Adrenal gland (tissue), 19 donors: ENCODE measurements at regions of chr6 and their contacts with region 1.

Region 1: GRCh38 chr6:111427341-111428116 is 55.5 kb downstream of the REV3L start:
- DNase-seq: peak in 5 of 7 donors; percentile 32 to 60 (median 46)
- H3K4me3 ChIP-seq: peak overlapping the region in 1 of 4 donors; percentile 15
- H3K27ac ChIP-seq: peak overlapping the region; percentile 11 to 58 (median 35)
- H3K4me1 ChIP-seq: peaks cover 15 to 39% of the 10 kb centered on the region in 2 donors
- H3K27me3 ChIP-seq: no peaks in the 10 kb centered on the region
- CTCF ChIP-seq: no peak
- POLR2A ChIP-seq: no peak

Region 2: DNA sequence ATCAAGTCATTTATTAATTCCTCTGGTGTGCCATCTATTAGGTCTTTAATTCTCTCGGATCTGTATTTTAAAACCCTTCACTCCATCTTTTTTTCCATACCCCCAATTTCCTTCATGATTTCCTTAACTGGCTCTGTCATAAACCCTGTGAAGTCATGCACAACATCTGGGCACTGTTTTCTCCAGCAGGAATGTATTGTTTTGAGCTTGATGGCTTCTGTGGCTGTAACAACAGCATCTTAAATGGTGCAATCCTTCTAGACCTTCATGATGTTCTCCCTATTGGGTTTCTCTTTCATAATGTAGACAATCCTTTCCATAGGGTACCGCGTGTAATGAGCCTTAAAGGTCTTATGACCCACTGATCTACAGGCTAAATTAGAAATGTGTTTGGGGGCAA is 641.3 kb before region 1 on chr6:
- intact Hi-C with region 1: no loop called
- DNase-seq: no peak
- H3K4me3 ChIP-seq: no peak overlapping the region
- H3K27ac ChIP-seq: no peak overlapping the region
- H3K4me1 ChIP-seq: peaks cover 0 to 10% of the 10 kb centered on the region in 2 donors
- H3K27me3 ChIP-seq: no peaks in the 10 kb centered on the region
- CTCF ChIP-seq: no peak
- POLR2A ChIP-seq: no peak

Region 3: DNA sequence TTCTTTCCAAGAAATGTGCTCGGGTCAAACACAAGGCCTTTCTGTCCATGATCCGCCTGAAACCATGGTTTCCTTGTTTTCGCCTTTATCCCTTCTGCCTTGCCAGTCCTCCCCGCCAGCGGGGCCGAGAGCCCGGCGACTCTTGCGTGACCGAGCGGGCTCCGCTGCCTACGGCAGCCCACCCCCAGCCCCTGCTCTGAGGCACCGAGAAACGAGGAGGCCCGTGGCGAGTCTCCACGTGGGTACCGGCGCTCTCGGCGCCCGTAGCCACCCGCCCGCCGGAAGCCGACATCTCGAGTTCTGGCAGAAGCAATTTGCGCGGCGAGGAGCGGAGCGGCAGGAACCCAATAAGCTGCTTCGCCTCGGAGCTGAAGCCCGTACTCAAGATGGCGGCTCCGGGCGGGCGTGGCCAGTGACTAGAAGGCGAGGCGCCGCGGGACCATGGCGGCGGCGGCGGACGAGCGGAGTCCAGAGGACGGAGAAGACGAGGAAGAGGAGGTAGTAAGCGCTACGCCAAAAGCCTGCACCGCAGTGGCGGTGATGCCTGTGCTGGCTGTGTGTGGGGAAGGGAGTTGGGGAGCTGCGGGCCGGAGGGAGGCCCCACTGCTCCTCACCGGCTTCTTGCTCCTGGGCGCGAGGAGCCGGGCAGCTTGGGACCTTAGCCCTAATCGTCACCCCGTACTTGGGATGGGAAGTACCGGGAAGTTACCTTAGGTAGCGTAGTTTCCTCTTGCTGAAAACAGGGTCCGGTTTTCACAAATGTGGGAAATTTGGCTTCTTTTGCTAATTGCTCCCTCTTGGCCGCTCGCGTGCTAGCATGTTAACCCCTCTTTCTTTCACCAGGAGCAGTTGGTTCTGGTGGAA is 469.0 kb before region 1 on chr6 and contains the start of gene GTF3C6:
- intact Hi-C with region 1: no loop called
- DNase-seq: peak; percentile 90 to 98 (median 95)
- H3K4me3 ChIP-seq: peak within 1 kb of the TSS; percentile 20 to 88 (median 74)
- H3K27ac ChIP-seq: peak within 1 kb of the TSS; percentile 68 to 95 (median 88)
- H3K4me1 ChIP-seq: peaks cover 5 to 17% of the 10 kb centered on the region in 2 donors
- H3K27me3 ChIP-seq: no peaks in the 10 kb centered on the region
- CTCF ChIP-seq: peak in 1 of 6 experiments; percentile 20
- POLR2A ChIP-seq: peak; percentile 51 to 81
- total RNA-seq, gene GTF3C6: 48.3 to 95.3 (median 70.2) TPM

Region 4: DNA sequence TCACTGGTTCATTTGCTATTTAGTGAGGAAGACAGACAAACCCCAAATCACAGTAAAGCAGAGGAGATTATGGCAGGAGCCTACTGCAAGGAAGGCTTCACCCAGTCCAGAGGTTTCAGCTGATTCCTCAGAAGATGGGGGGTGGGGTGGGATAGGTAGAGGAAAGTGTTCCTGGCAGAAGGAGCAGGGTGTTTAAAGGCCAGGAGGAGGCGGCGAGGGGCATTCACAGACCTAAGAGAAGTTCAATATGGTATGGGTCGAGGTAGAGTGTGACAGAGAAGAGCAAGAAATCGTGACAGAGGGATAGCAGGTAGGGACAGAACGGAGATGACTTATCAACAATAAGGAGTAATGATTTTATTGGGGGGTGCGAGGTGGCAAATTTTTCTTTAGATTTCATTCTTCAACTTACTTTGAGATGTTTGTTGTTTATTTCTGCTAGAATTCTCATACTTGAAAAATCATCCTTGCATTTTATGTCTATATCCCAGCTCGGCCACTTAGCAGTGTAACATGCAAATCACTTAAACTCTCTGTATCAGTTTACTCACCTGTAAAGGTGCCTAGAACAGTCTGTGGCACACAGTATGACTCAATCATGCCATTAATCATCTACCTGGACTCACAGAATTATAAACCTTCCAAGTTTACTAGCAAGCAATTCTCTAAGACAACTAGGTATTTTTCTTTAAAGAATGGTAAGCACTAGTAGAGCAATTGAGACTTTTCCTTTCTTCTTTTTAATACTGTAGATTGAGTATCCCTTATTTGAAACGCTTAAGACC is 121.2 kb before region 1 on chr6:
- intact Hi-C with region 1: no loop called
- DNase-seq: no peak
- H3K4me3 ChIP-seq: no peak overlapping the region
- H3K27ac ChIP-seq: no peak overlapping the region
- H3K4me1 ChIP-seq: no peaks in the 10 kb centered on the region
- H3K27me3 ChIP-seq: no peaks in the 10 kb centered on the region
- CTCF ChIP-seq: no peak
- POLR2A ChIP-seq: no peak

Region 5: DNA sequence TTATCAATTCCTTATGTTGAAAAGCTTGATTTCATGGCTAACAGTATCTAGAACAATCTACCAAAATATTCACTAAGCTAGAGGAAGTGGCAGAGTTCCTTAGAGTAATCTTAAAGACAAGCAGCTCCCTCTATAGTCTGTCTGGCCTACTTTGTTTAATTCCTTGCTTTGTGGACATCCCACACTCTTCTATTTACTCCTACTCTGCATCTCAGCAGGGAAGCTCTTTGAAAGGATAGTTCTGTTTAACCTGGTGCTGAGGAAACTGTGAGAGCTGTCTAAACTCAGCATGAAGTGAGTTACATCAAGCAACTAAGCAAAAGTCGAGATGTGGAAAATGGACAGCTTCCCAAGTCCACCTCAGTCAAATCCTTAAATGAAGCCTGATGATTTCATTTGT is 51.2 kb after region 1 on chr6:
- intact Hi-C with region 1: loop called in 1 of 2 experiments (anchors 10 kb)
- DNase-seq: no peak
- H3K4me3 ChIP-seq: no peak overlapping the region
- H3K27ac ChIP-seq: peak overlapping the region in 1 of 5 donors; percentile 2
- H3K4me1 ChIP-seq: peaks cover 17 to 47% of the 10 kb centered on the region in 2 donors
- H3K27me3 ChIP-seq: no peaks in the 10 kb centered on the region
- CTCF ChIP-seq: peak in 5 of 6 experiments; percentile 4 to 38 (median 28)
- POLR2A ChIP-seq: no peak

Region 6: DNA sequence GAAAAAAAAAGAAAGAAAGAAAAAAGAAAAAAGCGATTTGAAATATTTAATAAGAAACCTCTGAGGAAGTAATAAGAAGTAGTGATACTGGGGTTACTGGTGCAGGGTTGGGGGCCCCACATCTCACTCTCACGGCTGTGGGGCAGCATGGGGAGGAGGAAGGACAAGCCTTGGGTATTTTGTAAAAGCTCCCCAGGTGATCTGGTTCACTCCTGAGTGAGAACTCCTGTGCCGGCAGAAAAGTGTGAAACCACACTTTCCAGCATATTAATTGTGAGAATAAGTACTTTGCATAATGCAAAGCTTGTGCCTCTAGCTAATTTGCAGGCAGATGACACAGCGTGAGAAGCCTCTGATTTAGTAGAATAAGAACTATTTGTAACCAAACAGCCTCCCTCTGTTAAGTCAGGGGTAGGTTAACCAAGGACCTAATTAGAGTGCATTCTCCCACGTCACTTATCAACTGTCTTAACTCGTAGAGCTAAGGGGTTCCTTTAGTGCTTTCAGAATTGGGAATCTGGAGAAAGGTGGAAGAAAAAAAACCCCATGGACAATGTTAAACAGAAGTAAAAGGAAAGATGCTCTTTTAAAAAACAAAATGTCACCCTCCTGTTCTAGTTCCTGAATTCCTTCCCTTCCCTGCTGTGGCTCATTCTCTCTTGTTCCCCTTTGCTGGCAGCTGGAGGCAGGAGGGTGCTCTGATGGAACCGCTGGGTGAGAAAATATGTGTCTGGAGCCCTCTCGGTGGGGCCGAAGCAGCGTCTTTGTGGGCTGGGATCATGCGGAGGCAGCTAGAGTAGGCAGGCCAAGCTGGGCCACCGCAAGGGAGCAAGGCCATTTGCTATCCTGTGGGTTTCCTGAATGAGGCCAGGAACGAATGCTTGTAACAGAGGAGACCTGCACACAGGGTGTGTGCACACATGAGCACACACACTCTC is 337.0 kb after region 1 on chr6:
- intact Hi-C with region 1: no loop called
- DNase-seq: no peak
- H3K4me3 ChIP-seq: no peak overlapping the region
- H3K27ac ChIP-seq: no peak overlapping the region
- H3K4me1 ChIP-seq: peaks cover 0 to 16% of the 10 kb centered on the region in 2 donors
- H3K27me3 ChIP-seq: no peaks in the 10 kb centered on the region
- CTCF ChIP-seq: no peak
- POLR2A ChIP-seq: no peak